Ovary (tissue), 10 donors: ENCODE measurements at regions of chr19 and their contacts with region 1.

Region 1: GRCh38 chr19:12156223-12157058 is at the start of gene ZNF625:
- DNase-seq: peak; percentile 85 to 89 (median 86)
- H3K4me3 ChIP-seq: peak within 1 kb of the TSS; percentile 71
- H3K27ac ChIP-seq: peak within 1 kb of the TSS; percentile 36 to 70
- H3K4me1 ChIP-seq: peaks cover 2% of the 10 kb centered on the region
- H3K27me3 ChIP-seq: no peaks in the 10 kb centered on the region
- CTCF ChIP-seq: no peak
- EP300 ChIP-seq: no peak
- POLR2A ChIP-seq: peak; percentile 53
- total RNA-seq, gene ZNF625: 2.8 to 19.6 (median 9.1) TPM

Region 2: GRCh38 chr19:11814029-11814699 is 342.3 kb before region 1 on chr19 and contains the start of gene ZNF440:
- intact Hi-C with region 1: loop called in 1 of 4 experiments (anchors 5 kb)
- DNase-seq: peak; percentile 93 to 97 (median 95)
- H3K4me3 ChIP-seq: peak within 1 kb of the TSS; percentile 62
- H3K27ac ChIP-seq: peak within 1 kb of the TSS; percentile 5 to 70
- H3K4me1 ChIP-seq: no peaks in the 10 kb centered on the region
- H3K27me3 ChIP-seq: no peaks in the 10 kb centered on the region
- CTCF ChIP-seq: no peak
- EP300 ChIP-seq: no peak
- POLR2A ChIP-seq: peak; percentile 67
- total RNA-seq, gene ZNF440: 6.6 to 21.6 (median 12.1) TPM